Heart right ventricle (tissue), 16 donors: ENCODE measurements at regions of chr3 and their contacts with region 1.

Region 1: DNA sequence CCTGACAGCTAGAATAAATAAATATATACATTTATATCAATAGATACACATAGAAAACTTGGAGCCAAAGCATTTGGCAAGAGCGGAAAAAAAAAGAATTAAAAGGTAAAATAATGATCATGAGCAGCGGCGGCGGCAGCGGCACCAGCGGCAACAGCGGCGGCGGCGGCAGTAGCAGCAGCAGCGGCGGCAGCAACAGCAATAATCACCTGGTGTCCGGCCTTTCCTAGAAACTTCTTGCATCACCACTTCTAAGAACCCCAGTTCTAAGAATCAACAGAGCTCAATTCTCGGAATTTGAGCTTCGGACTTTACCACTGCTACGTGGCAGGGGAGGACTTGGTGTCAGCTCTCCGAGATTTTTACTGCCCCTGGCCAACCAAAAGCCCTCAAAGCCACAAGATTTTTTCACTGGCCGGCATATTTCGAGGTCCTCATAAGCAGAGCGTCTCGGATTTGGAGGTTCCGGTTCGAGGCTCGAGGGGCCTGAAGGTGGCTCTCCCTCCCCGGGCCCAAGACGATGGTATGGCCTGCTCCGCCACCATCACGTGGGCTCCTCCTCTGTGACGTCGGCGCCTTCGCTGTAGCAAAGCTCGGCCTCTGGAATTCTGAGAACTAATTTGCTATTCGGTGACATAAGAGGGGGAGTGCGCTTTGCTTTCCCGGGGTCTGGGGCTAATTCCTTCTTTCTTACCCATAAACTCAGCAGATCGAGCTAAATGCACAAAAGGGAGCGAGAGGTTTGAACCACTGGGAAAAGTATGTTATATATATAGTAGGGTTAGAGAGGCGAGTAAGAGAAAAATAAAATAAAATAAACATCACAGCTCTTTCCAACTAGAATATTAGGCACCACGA is at the start of gene BCL6:
- DNase-seq: peak; percentile 89 to 94
- ATAC-seq: peak; percentile 70 to 82 (median 80)
- H3K4me3 ChIP-seq: peak within 1 kb of the TSS; percentile 60 to 95 (median 74)
- H3K27ac ChIP-seq: peak within 1 kb of the TSS; percentile 85 to 100 (median 99)
- H3K4me1 ChIP-seq: peaks cover 3 to 51% (median 19%) of the 10 kb centered on the region in 9 donors
- H3K27me3 ChIP-seq: no peaks in the 10 kb centered on the region
- CTCF ChIP-seq: peak in 2 of 9 donors; percentile 6 to 22
- total RNA-seq, gene BCL6: 27.9 to 154 (median 51.7) TPM

Region 2: DNA sequence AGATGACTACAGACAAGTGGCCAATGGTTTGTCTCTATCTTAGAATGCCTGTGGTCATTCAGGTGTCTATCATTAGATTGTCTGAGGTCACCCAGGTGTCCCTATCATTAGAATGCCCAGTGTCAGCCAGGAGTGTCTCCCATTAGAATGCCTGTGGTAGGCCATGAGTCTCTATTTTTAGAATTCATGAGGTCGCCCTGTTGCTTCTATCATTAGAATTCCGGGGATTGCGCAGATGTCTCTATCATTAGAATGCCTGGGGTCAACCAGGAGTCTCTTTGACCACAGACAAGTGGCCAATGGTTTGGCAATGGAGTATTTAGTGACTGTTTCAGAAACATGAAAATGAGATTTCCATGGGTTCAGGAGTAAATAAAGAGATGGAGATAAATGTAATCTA is 50.6 kb before region 1 on chr3:
- intact Hi-C with region 1: no loop called
- DNase-seq: peak in 1 of 2 donors; percentile 23
- ATAC-seq: peak in 6 of 8 donors; percentile 31 to 87 (median 59)
- H3K4me3 ChIP-seq: no peak overlapping the region
- H3K27ac ChIP-seq: peak overlapping the region in 4 of 10 donors; percentile 44 to 74 (median 54)
- H3K4me1 ChIP-seq: peaks cover 0 to 25% (median 8%) of the 10 kb centered on the region in 9 donors
- H3K27me3 ChIP-seq: no peaks in the 10 kb centered on the region
- CTCF ChIP-seq: no peak

Region 3: GRCh38 chr3:187714404-187714979 is 30.9 kb before region 1 on chr3:
- intact Hi-C with region 1: no loop called
- DNase-seq: peak in 1 of 2 donors; percentile 80
- ATAC-seq: peak; percentile 76 to 94 (median 86)
- H3K4me3 ChIP-seq: no peak overlapping the region
- H3K27ac ChIP-seq: no peak overlapping the region
- H3K4me1 ChIP-seq: peaks cover 0 to 12% (median 3%) of the 10 kb centered on the region in 9 donors
- H3K27me3 ChIP-seq: no peaks in the 10 kb centered on the region
- CTCF ChIP-seq: peak; percentile 93 to 97 (median 94)

Region 4: DNA sequence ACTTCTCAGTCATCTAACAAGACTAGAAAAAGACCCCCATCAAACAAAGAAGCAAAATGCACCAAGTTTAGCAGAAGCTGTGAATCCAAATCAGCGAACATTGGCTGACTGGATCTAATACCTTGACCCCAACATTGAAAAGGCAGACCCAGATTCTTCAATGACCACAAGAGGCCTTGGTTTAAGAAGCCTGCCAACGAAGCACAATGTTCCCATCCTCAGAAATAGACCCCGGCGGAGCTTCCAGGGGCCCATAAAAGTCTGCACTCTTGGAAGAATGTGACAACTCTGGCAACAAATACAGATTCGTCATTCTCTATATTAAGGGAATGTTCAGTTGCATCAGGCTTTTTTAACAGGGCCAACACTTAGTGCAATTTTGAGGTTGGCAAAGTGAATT is 112.6 kb after region 1 on chr3:
- intact Hi-C with region 1: no loop called
- DNase-seq: no peak
- ATAC-seq: peak in 6 of 8 donors; percentile 46 to 93 (median 70)
- H3K4me3 ChIP-seq: no peak overlapping the region
- H3K27ac ChIP-seq: peak overlapping the region in 2 of 10 donors; percentile 42 to 44
- H3K4me1 ChIP-seq: peaks cover 0 to 6% (median 0%) of the 10 kb centered on the region in 9 donors
- H3K27me3 ChIP-seq: no peaks in the 10 kb centered on the region
- CTCF ChIP-seq: no peak

Region 5: GRCh38 chr3:187902041-187902471 is 156.6 kb after region 1 on chr3:
- intact Hi-C with region 1: no loop called
- DNase-seq: no peak
- ATAC-seq: no peak
- H3K4me3 ChIP-seq: no peak overlapping the region
- H3K27ac ChIP-seq: no peak overlapping the region
- H3K4me1 ChIP-seq: peaks cover 0 to 3% (median 0%) of the 10 kb centered on the region in 9 donors
- H3K27me3 ChIP-seq: no peaks in the 10 kb centered on the region
- CTCF ChIP-seq: no peak

Region 6: GRCh38 chr3:187963677-187964385 is 218.4 kb after region 1 on chr3:
- intact Hi-C with region 1: loop called in 5 of 10 experiments (anchors 5 to 10 kb)
- DNase-seq: peak in 1 of 2 donors; percentile 39
- ATAC-seq: peak; percentile 83 to 95 (median 92)
- H3K4me3 ChIP-seq: peak overlapping the region in 5 of 10 donors; percentile 11 to 29 (median 23)
- H3K27ac ChIP-seq: peak overlapping the region; percentile 44 to 89 (median 82)
- H3K4me1 ChIP-seq: peaks cover 0 to 70% (median 21%) of the 10 kb centered on the region in 9 donors
- H3K27me3 ChIP-seq: no peaks in the 10 kb centered on the region
- CTCF ChIP-seq: no peak

Region 7: GRCh38 chr3:188037216-188037718 is 291.8 kb after region 1 on chr3:
- intact Hi-C with region 1: loop called in 8 of 10 experiments (anchors 2 to 10 kb)
- DNase-seq: peak in 1 of 2 donors; percentile 28
- ATAC-seq: peak; percentile 66 to 92 (median 86)
- H3K4me3 ChIP-seq: peak overlapping the region in 4 of 10 donors; percentile 3 to 24 (median 16)
- H3K27ac ChIP-seq: peak overlapping the region in 8 of 10 donors; percentile 26 to 70 (median 54)
- H3K4me1 ChIP-seq: peaks cover 0 to 19% (median 13%) of the 10 kb centered on the region in 9 donors
- H3K27me3 ChIP-seq: no peaks in the 10 kb centered on the region
- CTCF ChIP-seq: peak; percentile 18 to 67 (median 50)

Region 8: DNA sequence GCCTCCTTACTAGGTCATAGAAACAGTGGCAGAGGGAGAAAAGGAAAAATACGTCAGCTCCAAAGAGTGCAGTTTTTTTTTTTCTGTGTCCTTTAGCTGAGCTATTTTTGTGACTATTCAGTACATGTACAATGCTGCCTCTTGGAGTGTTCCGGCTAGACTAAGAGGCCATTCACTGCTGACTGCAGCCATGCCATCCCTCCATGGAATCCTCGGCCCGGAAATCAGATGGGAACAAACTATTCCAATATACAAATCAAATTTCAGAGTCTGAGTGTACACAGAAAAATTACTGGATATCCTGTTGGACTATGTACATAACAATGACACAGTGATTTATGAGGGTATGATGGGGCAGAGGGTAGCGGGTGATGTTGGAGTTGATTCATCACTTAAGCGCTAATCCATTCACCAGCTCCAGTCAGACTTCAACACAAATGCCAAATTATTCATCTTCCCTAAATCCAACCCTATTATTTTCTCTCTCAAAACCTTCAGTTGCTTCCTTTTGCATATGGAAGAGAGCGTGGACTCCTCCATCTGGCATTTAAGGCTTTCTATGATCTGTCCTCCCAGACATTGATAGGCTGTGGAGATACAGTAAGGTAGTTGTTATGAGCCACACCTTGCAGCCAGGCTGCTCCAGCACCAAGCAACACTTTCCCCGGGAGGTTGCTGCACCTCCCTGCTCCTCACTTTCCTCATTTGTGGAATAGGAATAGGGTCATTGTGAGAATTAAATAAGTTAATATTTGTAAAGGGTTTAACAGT is 517.7 kb after region 1 on chr3:
- intact Hi-C with region 1: loop called in 7 of 10 experiments (anchors 5 to 10 kb)
- DNase-seq: peak in 1 of 2 donors; percentile 62
- ATAC-seq: peak; percentile 50 to 89 (median 84)
- H3K4me3 ChIP-seq: no peak overlapping the region
- H3K27ac ChIP-seq: peak overlapping the region; percentile 73 to 93 (median 86)
- H3K4me1 ChIP-seq: peaks cover 26 to 98% (median 74%) of the 10 kb centered on the region in 9 donors
- H3K27me3 ChIP-seq: no peaks in the 10 kb centered on the region
- CTCF ChIP-seq: no peak

Region 9: DNA sequence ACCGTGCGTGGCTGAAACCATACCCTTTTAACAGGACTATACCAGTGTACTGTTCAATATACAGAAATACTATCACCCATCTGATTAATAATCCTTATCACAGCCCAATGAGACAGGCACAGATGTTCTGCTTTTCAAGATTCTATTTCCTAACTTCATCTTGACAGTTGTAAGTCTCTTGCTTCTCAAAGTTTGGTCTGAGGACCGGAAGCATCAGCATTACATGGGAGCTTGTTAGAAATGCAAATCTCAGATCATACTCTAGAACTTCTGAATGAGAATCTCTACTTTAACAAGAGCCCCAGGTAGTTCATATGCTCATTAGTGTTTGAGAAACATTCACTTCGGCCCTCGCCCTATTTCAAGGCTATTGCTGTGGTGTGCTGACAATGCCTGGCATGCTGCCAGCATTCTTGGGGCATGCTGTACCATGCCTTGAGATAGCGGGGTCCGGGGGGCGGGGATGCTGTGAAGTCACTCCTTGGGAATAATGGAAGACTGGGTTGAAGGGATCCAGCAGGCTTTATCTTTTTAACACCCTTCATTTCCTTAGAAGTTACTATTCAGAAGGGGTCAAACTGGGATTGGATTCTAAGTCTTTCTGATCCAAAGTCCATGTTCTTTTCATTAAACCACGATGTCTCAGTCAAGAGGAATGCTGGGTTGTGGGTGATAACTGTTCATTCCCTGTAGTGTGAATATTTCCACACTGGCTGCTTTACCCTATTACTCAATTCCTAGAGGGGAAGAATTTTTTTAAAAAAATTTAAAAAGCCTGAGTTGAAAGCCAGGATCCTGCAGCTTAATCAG is 603.2 kb after region 1 on chr3:
- intact Hi-C with region 1: loop called in 4 of 10 experiments (anchors 5 to 10 kb)
- DNase-seq: peak; percentile 69 to 74
- ATAC-seq: peak; percentile 71 to 83 (median 76)
- H3K4me3 ChIP-seq: no peak overlapping the region
- H3K27ac ChIP-seq: peak overlapping the region; percentile 23 to 81 (median 63)
- H3K4me1 ChIP-seq: peaks cover 8 to 70% (median 45%) of the 10 kb centered on the region in 9 donors
- H3K27me3 ChIP-seq: no peaks in the 10 kb centered on the region
- CTCF ChIP-seq: no peak

Region 10: DNA sequence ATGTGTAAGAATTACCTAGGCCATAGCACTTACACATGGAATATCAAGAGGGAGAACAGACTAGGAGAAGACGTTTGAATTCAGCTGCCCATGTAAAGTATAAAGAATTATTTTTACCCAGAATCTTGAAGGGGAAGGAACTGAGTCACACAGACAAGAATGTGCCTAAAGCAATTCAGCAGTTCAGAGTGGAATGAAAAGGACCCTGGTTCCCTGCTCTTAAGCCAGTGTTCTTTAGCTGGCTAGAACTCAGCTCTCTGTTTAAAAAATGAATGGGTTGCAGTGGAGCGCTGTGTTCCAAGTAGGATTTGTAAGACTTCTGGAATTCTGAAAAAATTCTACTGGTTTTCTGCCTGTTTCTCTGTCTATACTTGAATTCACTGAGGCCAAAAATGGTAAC is 848.7 kb after region 1 on chr3:
- intact Hi-C with region 1: loop called in 1 of 10 experiments (anchors 10 kb)
- DNase-seq: no peak
- ATAC-seq: peak in 5 of 8 donors; percentile 49 to 88 (median 63)
- H3K4me3 ChIP-seq: no peak overlapping the region
- H3K27ac ChIP-seq: peak overlapping the region in 6 of 10 donors; percentile 10 to 59 (median 32)
- H3K4me1 ChIP-seq: peaks cover 0 to 52% (median 20%) of the 10 kb centered on the region in 9 donors
- H3K27me3 ChIP-seq: no peaks in the 10 kb centered on the region
- CTCF ChIP-seq: no peak

Region 11: DNA sequence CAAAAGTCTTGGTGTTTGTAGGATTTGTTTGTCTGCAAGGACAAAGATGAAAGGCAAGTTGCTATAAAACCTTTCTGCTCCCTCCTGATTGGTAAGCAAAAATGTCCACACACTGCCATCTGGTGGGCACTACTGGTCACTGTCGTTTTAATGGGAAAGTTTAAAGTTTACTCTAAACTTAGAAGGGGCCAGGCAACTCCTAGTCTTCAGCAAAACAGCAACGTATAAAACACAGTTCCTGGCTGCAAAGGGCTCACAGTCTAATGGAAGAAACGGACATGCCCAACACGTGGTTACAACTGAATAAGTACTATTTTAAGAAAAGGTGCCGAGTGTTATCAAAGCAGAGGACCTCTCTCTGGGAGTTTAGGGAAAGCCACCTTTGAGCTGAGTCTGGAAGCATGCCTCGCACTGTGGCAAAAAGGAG is 1402.7 kb after region 1 on chr3:
- intact Hi-C with region 1: loop called in 3 of 10 experiments (anchors 2 to 10 kb)
- DNase-seq: peak; percentile 23 to 68
- ATAC-seq: peak; percentile 56 to 79 (median 70)
- H3K4me3 ChIP-seq: no peak overlapping the region
- H3K27ac ChIP-seq: peak overlapping the region in 2 of 10 donors; percentile 11 to 46
- H3K4me1 ChIP-seq: peaks cover 0 to 32% (median 7%) of the 10 kb centered on the region in 9 donors
- H3K27me3 ChIP-seq: no peaks in the 10 kb centered on the region
- CTCF ChIP-seq: peak; percentile 68 to 85 (median 78)